Endothelial cell of umbilical vein (primary cell): ENCODE measurements at regions of chr2 and their contacts with region 1.

Region 1: GRCh38 chr2:98444436-98445176 is at the start of gene INPP4A:
- DNase-seq: peak; percentile 81
- H3K4me3 ChIP-seq: peak within 1 kb of the TSS; percentile 43 to 68 (median 52)
- H3K27ac ChIP-seq: peak within 1 kb of the TSS; percentile 52
- H3K4me1 ChIP-seq: peaks cover 16% of the 10 kb centered on the region
- H3K27me3 ChIP-seq: no peaks in the 10 kb centered on the region
- CTCF ChIP-seq: no peak
- POLR2A ChIP-seq: peak; percentile 77
- total RNA-seq, gene INPP4A: 25.7 and 28.8 TPM in 2 replicates

Region 2: GRCh38 chr2:98419977-98420725 is 24.5 kb before region 1 on chr2:
- CTCF ChIA-PET with region 1: no interaction called
- POLR2A ChIA-PET with region 1: interaction called, 3 read pairs
- dilution Hi-C with region 1: no loop called
- intact Hi-C with region 1: loop called (anchors 2 kb)
- DNase-seq: peak; percentile 86
- H3K4me3 ChIP-seq: peak overlapping the region in 1 of 3 experiments; percentile 18
- H3K27ac ChIP-seq: peak overlapping the region; percentile 56
- H3K4me1 ChIP-seq: peaks cover 23% of the 10 kb centered on the region
- H3K27me3 ChIP-seq: no peaks in the 10 kb centered on the region
- CTCF ChIP-seq: no peak
- POLR2A ChIP-seq: peak; percentile 57

Region 3: DNA sequence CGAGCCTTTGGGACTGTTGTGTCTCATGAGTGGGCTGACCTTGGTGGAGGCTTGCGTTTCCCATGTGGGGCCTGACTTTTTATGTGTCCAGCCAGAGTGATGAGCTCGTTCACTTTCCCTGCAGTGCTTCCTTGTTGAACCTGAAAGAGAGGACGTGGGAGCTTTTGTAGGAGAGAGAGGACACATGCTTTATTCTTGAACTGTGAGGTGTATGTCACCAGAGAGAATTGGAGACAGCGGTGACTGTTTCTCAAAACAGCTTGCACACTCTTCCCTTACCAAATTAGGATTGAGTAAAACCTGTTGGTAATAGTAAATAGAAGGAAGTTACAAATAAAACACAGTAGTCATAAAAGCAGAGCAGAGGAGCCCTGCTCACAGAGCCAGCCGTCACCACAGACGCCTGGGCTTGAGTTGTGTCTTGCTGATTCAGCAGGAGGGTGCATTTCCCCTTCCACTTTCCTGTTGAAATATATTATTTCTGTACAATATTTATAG is 60.8 kb after region 1 on chr2:
- CTCF ChIA-PET with region 1: no interaction called
- POLR2A ChIA-PET with region 1: no interaction called
- dilution Hi-C with region 1: no loop called
- intact Hi-C with region 1: loop called (anchors 2 kb)
- DNase-seq: peak; percentile 34
- H3K4me3 ChIP-seq: no peak overlapping the region
- H3K27ac ChIP-seq: no peak overlapping the region
- H3K4me1 ChIP-seq: peaks cover 3% of the 10 kb centered on the region
- H3K27me3 ChIP-seq: no peaks in the 10 kb centered on the region
- CTCF ChIP-seq: no peak
- POLR2A ChIP-seq: no peak

Region 4: GRCh38 chr2:98563394-98563793 is 118.8 kb after region 1 on chr2:
- CTCF ChIA-PET with region 1: no interaction called
- POLR2A ChIA-PET with region 1: no interaction called
- dilution Hi-C with region 1: no loop called
- intact Hi-C with region 1: no loop called
- DNase-seq: no peak
- H3K4me3 ChIP-seq: no peak overlapping the region
- H3K27ac ChIP-seq: no peak overlapping the region
- H3K4me1 ChIP-seq: no peaks in the 10 kb centered on the region
- H3K27me3 ChIP-seq: no peaks in the 10 kb centered on the region
- CTCF ChIP-seq: no peak
- POLR2A ChIP-seq: no peak